PC-3 (cell line): ENCODE measurements at regions of chr12 and their contacts with region 1.

Region 1: GRCh38 chr12:123654129-123654703 is 16.7 kb upstream of the TCTN2 start:
- DNase-seq: no peak
- ATAC-seq: no peak
- H3K4me3 ChIP-seq: no peak overlapping the region
- H3K27ac ChIP-seq: no peak overlapping the region
- H3K4me1 ChIP-seq: peaks cover under 1% of the 10 kb centered on the region; the same call in 1 of the 2 replicates
- H3K27me3 ChIP-seq: no peaks in the 10 kb centered on the region
- CTCF ChIP-seq: no peak

Region 2: DNA sequence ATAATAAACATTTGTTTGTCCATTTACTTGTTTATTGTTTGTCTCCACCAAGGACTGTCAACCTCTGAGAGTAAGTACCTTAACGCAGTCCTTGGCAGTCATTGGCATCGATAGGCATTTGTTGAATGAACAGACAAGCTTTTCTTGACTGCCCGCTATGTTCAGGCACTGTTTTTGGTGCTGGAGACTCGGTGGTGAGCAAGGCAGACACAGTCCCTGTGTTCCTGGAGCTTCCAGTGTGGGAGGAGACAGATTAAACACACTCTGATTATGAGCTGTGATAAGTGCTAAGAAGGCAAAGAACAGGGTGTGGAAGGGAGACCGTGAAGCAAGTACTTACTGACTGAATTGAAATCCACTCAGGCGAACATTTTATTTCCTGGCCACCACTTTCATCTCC is 59.2 kb after region 1 on chr12:
- CTCF ChIA-PET with region 1: interaction called, 6 read pairs
- POLR2A ChIA-PET with region 1: interaction called, 17 read pairs
- intact Hi-C with region 1: no loop called
- DNase-seq: peak; percentile 29
- ATAC-seq: peak; percentile 19
- H3K4me3 ChIP-seq: peak overlapping the region; percentile 99
- H3K27ac ChIP-seq: no peak overlapping the region
- H3K4me1 ChIP-seq: peaks cover 18% of the 10 kb centered on the region
- H3K27me3 ChIP-seq: no peaks in the 10 kb centered on the region
- CTCF ChIP-seq: no peak